ENCODE measurements at regions of chr18 and their contacts with region 1.

Region 1: GRCh38 chr18:46660955-46661749 is 4.1 kb upstream of the LOXHD1 start:
- DNase-seq: no peak
- ATAC-seq: no peak
- H3K4me3 Mint-ChIP-seq: no peak overlapping the region
- H3K27ac Mint-ChIP-seq: no peak overlapping the region
- H3K4me1 Mint-ChIP-seq: no peaks in the 10 kb centered on the region
- H3K27me3 Mint-ChIP-seq: peaks cover 8% of the 10 kb centered on the region

Region 2: DNA sequence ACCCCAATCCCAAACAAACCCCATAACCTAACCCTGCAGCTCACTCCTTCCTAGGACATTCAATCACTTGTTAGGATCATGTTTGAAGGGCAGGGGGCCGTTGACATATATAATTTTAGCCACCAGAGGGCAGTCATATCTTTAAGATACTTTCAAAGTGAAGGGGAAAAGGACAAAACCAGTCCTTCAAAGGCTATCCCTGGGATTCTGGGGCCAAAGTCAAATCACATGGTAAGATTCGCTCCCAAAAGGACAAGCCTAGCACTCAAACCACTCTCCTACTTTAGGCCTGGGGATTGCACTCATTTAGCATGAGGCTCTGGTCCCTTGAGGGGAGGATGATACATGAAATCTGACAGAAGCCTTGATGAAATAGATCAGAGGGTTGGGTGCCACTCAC is 512.3 kb before region 1 on chr18:
- CTCF ChIA-PET with region 1: interaction called, 96 read pairs
- DNase-seq: peak; percentile 69
- ATAC-seq: peak; percentile 53
- H3K4me3 Mint-ChIP-seq: no peak overlapping the region
- H3K27ac Mint-ChIP-seq: no peak overlapping the region
- H3K4me1 Mint-ChIP-seq: peaks cover 28% of the 10 kb centered on the region
- H3K27me3 Mint-ChIP-seq: peaks cover 16% of the 10 kb centered on the region

Region 3: DNA sequence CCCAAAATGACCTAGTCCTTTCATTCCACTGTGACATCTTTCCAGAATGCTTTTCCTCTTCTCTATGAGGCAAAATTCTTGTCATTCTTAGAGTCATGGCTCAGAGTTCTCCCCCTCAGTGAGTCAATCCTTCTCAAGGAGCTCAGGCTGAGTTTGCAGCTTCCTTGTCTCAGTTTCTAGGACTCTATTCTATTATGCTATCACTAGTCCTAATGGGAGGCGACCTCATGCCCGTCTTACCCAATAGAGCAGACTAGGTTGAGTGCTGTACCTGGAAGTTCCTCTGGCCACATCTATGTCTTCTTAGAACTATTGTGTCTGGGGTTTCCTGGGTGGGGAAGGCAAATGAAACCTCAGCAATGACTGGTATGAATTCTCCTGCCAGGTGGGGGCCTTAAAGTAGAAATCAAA is 505.5 kb before region 1 on chr18:
- CTCF ChIA-PET with region 1: interaction called, 96 read pairs
- DNase-seq: peak; percentile 87
- ATAC-seq: peak; percentile 92
- H3K4me3 Mint-ChIP-seq: peak overlapping the region; percentile 62
- H3K27ac Mint-ChIP-seq: peak overlapping the region; percentile 96
- H3K4me1 Mint-ChIP-seq: peaks cover 53% of the 10 kb centered on the region
- H3K27me3 Mint-ChIP-seq: peaks cover 41% of the 10 kb centered on the region

Region 4: DNA sequence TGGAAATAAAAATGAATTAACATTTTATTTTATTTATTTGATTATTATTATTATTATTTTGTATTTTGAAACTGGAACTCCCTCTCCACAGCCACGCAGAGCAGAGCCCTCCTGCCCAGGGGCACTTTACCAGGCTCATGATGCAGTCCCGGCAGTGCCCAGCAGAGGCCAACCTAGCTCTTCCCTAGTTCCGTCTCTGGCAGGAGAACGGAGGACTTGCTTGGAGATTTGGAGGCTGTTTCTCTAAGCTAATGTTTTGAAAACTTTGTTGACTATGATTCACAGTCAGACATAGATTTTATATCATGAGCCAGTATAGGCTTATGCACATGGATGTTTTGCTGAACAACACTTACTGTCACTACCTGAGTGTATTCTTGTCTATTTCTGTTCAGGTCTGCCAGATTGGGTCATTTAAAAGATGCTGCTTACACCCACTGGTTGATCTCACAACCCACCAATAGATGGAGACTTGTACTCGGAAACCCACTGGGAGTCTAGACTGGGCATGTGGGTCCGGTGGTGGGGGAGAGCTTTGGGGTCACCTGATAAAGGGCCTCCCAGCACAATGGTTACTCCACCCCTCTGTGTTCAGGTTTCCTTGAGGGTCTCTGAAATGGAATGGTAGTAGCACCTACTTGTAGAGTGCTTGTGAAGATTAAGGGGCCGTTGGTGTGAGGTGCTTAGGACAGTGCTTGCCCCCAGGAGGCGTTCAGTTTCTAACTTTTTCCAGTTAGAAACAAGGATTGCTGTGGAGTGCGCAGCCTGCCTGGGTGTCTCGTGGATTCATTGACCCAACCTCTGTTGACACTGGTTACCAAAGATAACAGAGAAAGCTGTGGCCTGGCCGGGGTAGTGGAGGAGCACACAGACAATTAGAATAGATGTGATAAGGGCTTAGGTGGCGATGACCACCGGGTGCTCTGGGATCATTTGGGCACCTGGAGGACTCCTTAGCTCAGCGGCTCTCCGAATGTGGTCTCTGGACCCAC is 379.7 kb before region 1 on chr18:
- CTCF ChIA-PET with region 1: interaction called, 62 read pairs
- DNase-seq: peak; percentile 72
- ATAC-seq: peak; percentile 90
- H3K4me3 Mint-ChIP-seq: no peak overlapping the region
- H3K27ac Mint-ChIP-seq: no peak overlapping the region
- H3K4me1 Mint-ChIP-seq: peaks cover 10% of the 10 kb centered on the region
- H3K27me3 Mint-ChIP-seq: no peaks in the 10 kb centered on the region

Region 5: DNA sequence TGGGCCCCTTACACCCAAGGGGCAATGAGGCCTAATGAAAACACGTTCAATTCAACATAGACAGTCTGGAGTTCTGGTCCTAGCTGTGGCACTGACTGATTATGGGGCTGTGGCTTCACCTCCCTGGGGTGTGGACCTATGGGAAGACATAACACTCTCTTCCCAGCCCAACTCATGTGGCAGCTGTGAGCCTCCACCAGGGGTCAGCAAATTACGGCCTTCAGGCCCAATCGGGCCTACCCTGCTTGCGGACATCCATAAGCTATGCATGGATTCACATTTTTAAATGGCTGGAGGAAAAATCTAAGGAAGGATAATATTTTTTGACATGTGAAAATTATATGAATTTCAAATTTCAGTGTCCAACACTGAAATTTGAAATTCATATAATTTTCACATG is 105.4 kb before region 1 on chr18:
- CTCF ChIA-PET with region 1: interaction called, 13 read pairs
- DNase-seq: no peak
- ATAC-seq: peak; percentile 39
- H3K4me3 Mint-ChIP-seq: no peak overlapping the region
- H3K27ac Mint-ChIP-seq: no peak overlapping the region
- H3K4me1 Mint-ChIP-seq: no peaks in the 10 kb centered on the region
- H3K27me3 Mint-ChIP-seq: no peaks in the 10 kb centered on the region

Region 6: GRCh38 chr18:46622999-46623398 is 38.2 kb before region 1 on chr18:
- CTCF ChIA-PET with region 1: interaction called, 10 read pairs
- DNase-seq: no peak
- ATAC-seq: peak; percentile 31
- H3K4me3 Mint-ChIP-seq: no peak overlapping the region
- H3K27ac Mint-ChIP-seq: peak overlapping the region; percentile 80
- H3K4me1 Mint-ChIP-seq: peaks cover 32% of the 10 kb centered on the region
- H3K27me3 Mint-ChIP-seq: peaks cover 8% of the 10 kb centered on the region

Measured in activated CD8-positive, alpha-beta memory T cell treated with anti-CD3 and anti-CD28 coated beads, Interleukin-2, amount 10 ng/mL, durations not matched to agents 7 days and 5 days (primary cell).